ENCODE measurements at regions of chr7 and their contacts with region 1.

Region 1: DNA sequence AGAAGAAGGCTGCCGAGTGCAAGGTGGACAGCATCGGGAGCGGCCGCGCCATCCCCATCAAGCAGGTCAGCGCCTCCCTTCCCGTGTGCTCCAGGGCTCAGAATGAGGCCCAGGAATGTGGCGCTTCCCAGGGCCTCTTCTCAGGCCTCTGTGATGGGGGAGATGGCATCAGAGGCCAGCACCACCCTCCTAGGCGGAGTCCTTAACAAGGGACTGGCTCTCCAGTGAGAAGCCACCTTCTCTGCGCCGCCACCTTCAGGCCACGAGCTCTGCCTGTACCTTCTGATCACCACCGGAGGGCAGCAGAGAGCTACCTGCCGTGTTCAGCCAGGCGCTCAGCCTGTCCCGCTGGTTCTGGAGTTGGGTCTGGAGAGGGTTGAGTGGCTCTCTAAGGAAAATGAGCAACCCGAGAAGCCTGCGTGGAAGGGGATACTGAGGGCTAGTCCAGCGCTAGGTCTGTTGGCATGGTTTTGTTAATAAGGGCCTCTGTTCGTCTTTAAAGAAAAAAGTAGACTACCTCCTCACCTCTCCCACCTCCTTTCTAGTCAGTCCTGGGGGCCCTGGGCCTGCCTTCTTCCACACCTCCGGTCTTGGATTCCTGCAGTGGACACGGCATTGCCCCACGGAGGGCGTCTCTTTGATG is 37.7 kb downstream of the AGAP3 start:
- DNase-seq: peak; percentile 93
- ATAC-seq: peak; percentile 70
- H3K4me3 Mint-ChIP-seq: peak overlapping the region; percentile 30
- H3K27ac Mint-ChIP-seq: peak overlapping the region; percentile 95
- H3K4me1 Mint-ChIP-seq: peaks cover 31% of the 10 kb centered on the region
- H3K27me3 Mint-ChIP-seq: peaks cover 5% of the 10 kb centered on the region; the same call in 1 of the 2 replicates
- CTCF ChIP-seq: peak; percentile 95

Region 2: DNA sequence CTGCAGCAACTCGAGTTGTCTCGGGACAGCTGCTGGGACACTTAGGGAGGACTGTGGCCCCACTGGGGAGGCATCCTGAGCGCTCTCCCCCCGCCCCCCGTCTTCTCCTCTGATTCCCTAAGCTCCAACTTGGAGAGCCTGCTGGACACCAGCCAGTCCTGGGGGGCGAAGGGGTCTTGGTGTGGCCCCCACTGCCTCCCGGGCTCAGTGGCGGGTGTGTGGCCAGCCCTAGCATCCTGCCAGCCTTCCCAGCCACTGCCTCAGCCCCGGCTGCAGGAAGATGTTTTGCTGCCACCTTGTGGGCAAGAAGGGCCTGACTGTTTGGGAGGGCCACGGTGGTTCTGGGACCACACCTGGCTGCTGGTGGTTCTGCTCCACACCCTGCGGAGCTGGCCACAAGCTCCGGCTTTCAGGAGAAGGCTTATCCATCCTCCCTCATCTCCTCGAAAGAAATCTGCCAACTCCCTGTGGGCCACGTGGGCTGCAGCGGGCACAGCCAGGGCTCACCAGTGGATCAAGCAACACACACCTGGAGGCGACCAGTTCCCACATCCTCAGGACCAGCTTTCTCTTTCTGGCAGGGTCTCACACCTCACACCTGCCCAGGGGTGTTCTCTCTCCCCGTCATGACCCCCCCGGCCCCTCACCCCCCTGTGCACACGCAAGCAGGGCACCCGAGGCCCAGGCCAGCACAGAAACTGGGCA is 12.8 kb before region 1 on chr7:
- CTCF ChIA-PET with region 1: interaction called, 65 read pairs
- POLR2A ChIA-PET with region 1: no interaction called
- DNase-seq: peak; percentile 89
- ATAC-seq: peak; percentile 56
- H3K4me3 Mint-ChIP-seq: no peak overlapping the region
- H3K27ac Mint-ChIP-seq: no peak overlapping the region
- H3K4me1 Mint-ChIP-seq: peaks cover 34% of the 10 kb centered on the region
- H3K27me3 Mint-ChIP-seq: peaks cover 9% of the 10 kb centered on the region
- CTCF ChIP-seq: peak; percentile 90

Region 3: GRCh38 chr7:151143261-151144015 is 19.5 kb after region 1 on chr7:
- CTCF ChIA-PET with region 1: interaction called, 59 read pairs
- POLR2A ChIA-PET with region 1: no interaction called
- DNase-seq: no peak
- ATAC-seq: no peak
- H3K4me3 Mint-ChIP-seq: no peak overlapping the region
- H3K27ac Mint-ChIP-seq: no peak overlapping the region; the same call in 1 of the 2 replicates
- H3K4me1 Mint-ChIP-seq: peaks cover 20% of the 10 kb centered on the region
- H3K27me3 Mint-ChIP-seq: no peaks in the 10 kb centered on the region
- CTCF ChIP-seq: no peak

Region 4: DNA sequence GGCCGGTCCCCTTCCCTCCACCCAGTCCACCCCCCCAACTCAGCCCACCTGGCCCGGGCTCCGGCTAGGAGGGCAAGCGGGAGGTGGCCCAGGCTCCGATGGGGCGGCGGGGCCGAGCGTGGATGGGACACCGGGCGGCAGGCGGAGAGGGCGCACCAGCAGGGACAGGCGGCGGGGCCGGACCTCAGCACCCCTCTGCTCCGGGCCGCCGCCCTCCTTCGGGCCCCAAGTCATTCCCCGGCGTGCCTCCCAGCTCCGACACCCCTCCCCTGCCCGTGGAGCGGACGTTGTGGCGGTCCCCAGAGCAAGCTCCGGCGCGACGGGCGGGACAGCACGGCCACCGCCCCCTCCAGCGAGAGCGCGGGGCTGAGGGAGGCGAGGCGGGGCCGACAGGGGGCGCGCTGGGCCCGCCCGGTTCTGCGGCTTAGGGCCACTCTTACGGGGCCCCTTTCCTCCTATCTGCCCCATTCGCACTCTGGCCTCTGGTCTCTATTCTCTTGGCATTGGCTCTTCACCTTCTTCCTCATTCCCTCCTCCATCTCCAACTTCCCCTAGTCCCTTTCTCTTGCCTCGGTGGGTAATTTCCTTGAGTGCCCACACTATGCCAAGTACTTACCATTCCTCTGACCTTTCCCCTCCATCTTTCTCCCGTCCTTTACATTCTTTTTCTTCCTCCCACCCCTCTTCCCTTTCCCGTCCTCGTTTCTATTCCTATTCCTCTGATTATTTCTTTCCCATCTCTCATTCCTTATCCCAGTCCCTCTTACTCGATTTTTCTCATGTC is 44.3 kb after region 1 on chr7:
- CTCF ChIA-PET with region 1: interaction called, 59 read pairs
- POLR2A ChIA-PET with region 1: no interaction called
- DNase-seq: peak; percentile 75
- ATAC-seq: peak; percentile 79
- H3K4me3 Mint-ChIP-seq: peak overlapping the region; percentile 67
- H3K27ac Mint-ChIP-seq: no peak overlapping the region
- H3K4me1 Mint-ChIP-seq: peaks cover 13% of the 10 kb centered on the region
- H3K27me3 Mint-ChIP-seq: peaks cover 52% of the 10 kb centered on the region
- CTCF ChIP-seq: peak; percentile 76

Region 5: GRCh38 chr7:151210087-151210854 is 86.3 kb after region 1 on chr7 and contains the start of gene H2BK1:
- CTCF ChIA-PET with region 1: interaction called, 24 read pairs
- POLR2A ChIA-PET with region 1: no interaction called
- DNase-seq: peak; percentile 53
- ATAC-seq: peak; percentile 66
- H3K4me3 Mint-ChIP-seq: no peak within 1 kb of the TSS
- H3K27ac Mint-ChIP-seq: peak within 1 kb of the TSS; percentile 69; the same call in 1 of the 2 replicates
- H3K4me1 Mint-ChIP-seq: peaks cover 12% of the 10 kb centered on the region
- H3K27me3 Mint-ChIP-seq: no peaks in the 10 kb centered on the region; the same call in 1 of the 2 replicates
- CTCF ChIP-seq: no peak
- total RNA-seq, gene H2BK1: 0.87 TPM in 1 of 3 replicates, not detected in the others

Measured in WTC11 (cell line).